ENCODE measurements at regions of chr20 and their contacts with region 1.

Region 1: GRCh38 chr20:50449738-50450495 is 60.3 kb upstream of the PTPN1 start:
- DNase-seq: no peak
- H3K4me3 ChIP-seq: no peak overlapping the region
- H3K27ac ChIP-seq: no peak overlapping the region
- H3K4me1 ChIP-seq: peaks cover 13% of the 10 kb centered on the region
- H3K27me3 ChIP-seq: no peaks in the 10 kb centered on the region
- CTCF ChIP-seq: no peak

Region 2: GRCh38 chr20:50120897-50121693 is 328.8 kb before region 1 on chr20:
- CTCF ChIA-PET with region 1: no interaction called
- dilution Hi-C with region 1: loop called (anchors 5 kb)
- in situ Hi-C with region 1: no loop called
- intact Hi-C with region 1: no loop called
- DNase-seq: no peak
- H3K4me3 ChIP-seq: no peak overlapping the region
- H3K27ac ChIP-seq: no peak overlapping the region
- H3K4me1 ChIP-seq: peaks cover 4% of the 10 kb centered on the region
- H3K27me3 ChIP-seq: no peaks in the 10 kb centered on the region
- CTCF ChIP-seq: peak; percentile 96 to 99

Region 3: GRCh38 chr20:50179507-50180016 is 270.4 kb before region 1 on chr20:
- CTCF ChIA-PET with region 1: no interaction called
- dilution Hi-C with region 1: loop called (anchors 5 kb)
- in situ Hi-C with region 1: no loop called
- intact Hi-C with region 1: no loop called
- DNase-seq: no peak
- H3K4me3 ChIP-seq: no peak overlapping the region
- H3K27ac ChIP-seq: no peak overlapping the region
- H3K4me1 ChIP-seq: no peaks in the 10 kb centered on the region
- H3K27me3 ChIP-seq: no peaks in the 10 kb centered on the region
- CTCF ChIP-seq: no peak

Region 4: GRCh38 chr20:50242853-50243609 is 206.9 kb before region 1 on chr20:
- CTCF ChIA-PET with region 1: no interaction called
- dilution Hi-C with region 1: loop called (anchors 5 kb)
- in situ Hi-C with region 1: no loop called
- intact Hi-C with region 1: no loop called
- DNase-seq: peak; percentile 93
- H3K4me3 ChIP-seq: no peak overlapping the region
- H3K27ac ChIP-seq: peak overlapping the region; percentile 87
- H3K4me1 ChIP-seq: peaks cover 64% of the 10 kb centered on the region
- H3K27me3 ChIP-seq: no peaks in the 10 kb centered on the region
- CTCF ChIP-seq: no peak

Region 5: GRCh38 chr20:50354721-50355592 is 95.0 kb before region 1 on chr20:
- CTCF ChIA-PET with region 1: no interaction called
- dilution Hi-C with region 1: loop called (anchors 5 kb)
- in situ Hi-C with region 1: no loop called
- intact Hi-C with region 1: no loop called
- DNase-seq: peak; percentile 68
- H3K4me3 ChIP-seq: no peak overlapping the region
- H3K27ac ChIP-seq: no peak overlapping the region
- H3K4me1 ChIP-seq: peaks cover 1% of the 10 kb centered on the region
- H3K27me3 ChIP-seq: no peaks in the 10 kb centered on the region
- CTCF ChIP-seq: no peak

Region 6: GRCh38 chr20:50415516-50416113 is 34.3 kb before region 1 on chr20:
- CTCF ChIA-PET with region 1: no interaction called
- dilution Hi-C with region 1: loop called (anchors 5 kb)
- in situ Hi-C with region 1: no loop called
- intact Hi-C with region 1: no loop called
- DNase-seq: peak; percentile 78
- H3K4me3 ChIP-seq: no peak overlapping the region
- H3K27ac ChIP-seq: peak overlapping the region; percentile 73
- H3K4me1 ChIP-seq: peaks cover 22% of the 10 kb centered on the region
- H3K27me3 ChIP-seq: no peaks in the 10 kb centered on the region
- CTCF ChIP-seq: no peak

Measured in mammary epithelial cell (primary cell).